GM12878 (cell line): ENCODE measurements at regions of chr19 and their contacts with region 1.

Region 1: GRCh38 chr19:45137179-45137761 is 23.5 kb downstream of the NKPD1 start:
- DNase-seq: peak; percentile 93
- ATAC-seq: peak; percentile 95
- H3K4me3 ChIP-seq: peak overlapping the region; percentile 39; the same call in 1 of the 2 replicates
- H3K27ac ChIP-seq: peak overlapping the region; percentile 97
- H3K4me1 ChIP-seq: peaks cover 51% of the 10 kb centered on the region
- H3K27me3 ChIP-seq: no peaks in the 10 kb centered on the region
- CTCF ChIP-seq: peak in 2 of 3 experiments; percentile 14 to 29; a peak in 2 of 6 replicates
- EP300 ChIP-seq: peak in 1 of 2 experiments; percentile 81; a peak in 2 of 4 replicates
- POLR2A ChIP-seq: peak; percentile 47; the same call in 1 of the 2 replicates
- RAD21 ChIP-seq: no peak

Region 2: DNA sequence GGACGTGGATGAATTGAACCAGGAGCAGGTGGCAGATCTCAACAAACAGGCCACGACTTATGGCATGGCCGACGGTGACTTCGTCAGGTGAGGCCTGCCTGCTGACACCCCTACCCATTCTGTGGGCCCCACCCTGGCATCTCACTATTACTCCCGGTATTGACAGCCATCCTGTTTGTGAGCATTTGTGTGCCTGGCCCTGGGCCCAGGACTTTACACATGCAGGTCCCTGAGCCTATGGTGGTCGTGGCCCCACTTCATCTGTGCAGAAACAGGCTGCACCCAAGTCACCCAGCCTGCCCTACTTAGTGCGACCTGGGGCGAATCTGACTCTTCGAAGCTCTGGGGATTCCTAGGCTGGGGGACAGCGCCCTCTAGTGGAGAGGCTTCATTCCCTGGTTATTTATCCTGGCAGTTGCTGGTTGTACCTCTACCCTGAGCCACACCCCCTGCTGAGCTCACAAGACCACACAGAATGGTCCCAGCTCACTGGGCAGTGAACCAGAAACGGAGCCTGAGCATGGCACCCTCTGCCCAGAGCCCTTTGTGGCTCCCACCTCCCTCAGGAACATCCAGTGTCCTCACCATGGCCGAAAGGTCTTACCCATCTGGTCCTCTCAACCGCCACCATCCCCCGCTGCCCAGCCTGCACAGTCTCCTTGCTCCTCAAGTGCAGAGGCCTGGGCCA is 77.8 kb before region 1 on chr19:
- CTCF ChIA-PET with region 1: no interaction called
- POLR2A ChIA-PET with region 1: no interaction called
- RAD21 ChIA-PET with region 1: no interaction called
- SMC1A ChIA-PET with region 1: no interaction called
- in situ Hi-C with region 1: no loop called
- intact Hi-C with region 1: no loop called
- DNase-seq: no peak
- ATAC-seq: peak; percentile 97
- H3K4me3 ChIP-seq: no peak overlapping the region
- H3K27ac ChIP-seq: no peak overlapping the region
- H3K4me1 ChIP-seq: no peaks in the 10 kb centered on the region
- H3K27me3 ChIP-seq: no peaks in the 10 kb centered on the region
- CTCF ChIP-seq: peak; percentile 90 to 97 (median 90)
- EP300 ChIP-seq: no peak
- POLR2A ChIP-seq: no peak
- RAD21 ChIP-seq: peak; percentile 93

Region 3: GRCh38 chr19:45079063-45079910 is 58.0 kb before region 1 on chr19 and contains the start of gene GEMIN7:
- CTCF ChIA-PET with region 1: interaction called, 6 read pairs
- POLR2A ChIA-PET with region 1: interaction called, 8 read pairs
- RAD21 ChIA-PET with region 1: interaction called, 3 read pairs
- SMC1A ChIA-PET with region 1: interaction called, 4 read pairs
- in situ Hi-C with region 1: no loop called
- intact Hi-C with region 1: loop called (anchors 5 kb)
- DNase-seq: peak; percentile 64
- ATAC-seq: peak; percentile 56
- H3K4me3 ChIP-seq: peak within 1 kb of the TSS; percentile 89
- H3K27ac ChIP-seq: peak within 1 kb of the TSS; percentile 95
- H3K4me1 ChIP-seq: peaks cover 22% of the 10 kb centered on the region
- H3K27me3 ChIP-seq: no peaks in the 10 kb centered on the region
- CTCF ChIP-seq: peak in 2 of 3 experiments; percentile 9 to 11; a peak in 1 of 6 replicates
- EP300 ChIP-seq: peak; percentile 65 to 80; a peak in 2 of 4 replicates
- POLR2A ChIP-seq: peak; percentile 83
- RAD21 ChIP-seq: no peak
- polyA plus RNA-seq, gene GEMIN7: 51.6 to 55.3 TPM

Region 4: DNA sequence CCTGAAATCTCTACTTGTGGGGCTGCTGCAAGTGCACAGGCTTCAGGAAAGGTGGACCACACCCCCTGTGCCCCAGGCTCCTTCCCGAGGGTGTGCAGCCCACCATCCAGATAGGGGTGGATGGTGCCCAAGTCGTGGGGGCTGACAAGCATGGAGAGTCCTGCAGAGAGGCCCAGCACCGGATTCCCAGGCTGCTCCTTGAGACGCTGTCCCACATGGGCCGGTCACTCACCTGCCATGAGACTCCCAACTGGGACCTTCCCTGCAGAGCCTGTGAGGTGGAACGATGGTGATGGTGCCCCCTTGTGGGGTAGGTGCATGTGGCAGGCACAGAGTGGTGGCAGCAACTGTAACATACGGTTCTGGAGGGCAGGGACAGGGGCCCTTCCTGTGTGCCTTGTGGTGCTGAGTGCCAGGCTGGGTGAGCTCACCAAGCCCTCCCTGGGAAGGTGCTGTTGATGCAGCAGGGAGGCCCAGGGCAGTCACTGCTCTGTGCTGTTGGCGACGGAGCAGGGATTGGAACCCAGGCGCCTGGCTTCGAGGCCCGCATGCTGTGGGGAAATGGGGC is 11.3 kb before region 1 on chr19:
- CTCF ChIA-PET with region 1: interaction called, 39 read pairs
- POLR2A ChIA-PET with region 1: interaction called, 4 read pairs
- RAD21 ChIA-PET with region 1: interaction called, 12 read pairs
- SMC1A ChIA-PET with region 1: interaction called, 39 read pairs
- in situ Hi-C with region 1: no loop called
- intact Hi-C with region 1: no loop called
- DNase-seq: no peak
- ATAC-seq: peak; percentile 95
- H3K4me3 ChIP-seq: no peak overlapping the region
- H3K27ac ChIP-seq: no peak overlapping the region
- H3K4me1 ChIP-seq: peaks cover 21% of the 10 kb centered on the region
- H3K27me3 ChIP-seq: no peaks in the 10 kb centered on the region
- CTCF ChIP-seq: peak; percentile 79 to 93 (median 83)
- EP300 ChIP-seq: no peak
- POLR2A ChIP-seq: peak; percentile 28; the same call in 1 of the 2 replicates
- RAD21 ChIP-seq: peak; percentile 76

Region 5: DNA sequence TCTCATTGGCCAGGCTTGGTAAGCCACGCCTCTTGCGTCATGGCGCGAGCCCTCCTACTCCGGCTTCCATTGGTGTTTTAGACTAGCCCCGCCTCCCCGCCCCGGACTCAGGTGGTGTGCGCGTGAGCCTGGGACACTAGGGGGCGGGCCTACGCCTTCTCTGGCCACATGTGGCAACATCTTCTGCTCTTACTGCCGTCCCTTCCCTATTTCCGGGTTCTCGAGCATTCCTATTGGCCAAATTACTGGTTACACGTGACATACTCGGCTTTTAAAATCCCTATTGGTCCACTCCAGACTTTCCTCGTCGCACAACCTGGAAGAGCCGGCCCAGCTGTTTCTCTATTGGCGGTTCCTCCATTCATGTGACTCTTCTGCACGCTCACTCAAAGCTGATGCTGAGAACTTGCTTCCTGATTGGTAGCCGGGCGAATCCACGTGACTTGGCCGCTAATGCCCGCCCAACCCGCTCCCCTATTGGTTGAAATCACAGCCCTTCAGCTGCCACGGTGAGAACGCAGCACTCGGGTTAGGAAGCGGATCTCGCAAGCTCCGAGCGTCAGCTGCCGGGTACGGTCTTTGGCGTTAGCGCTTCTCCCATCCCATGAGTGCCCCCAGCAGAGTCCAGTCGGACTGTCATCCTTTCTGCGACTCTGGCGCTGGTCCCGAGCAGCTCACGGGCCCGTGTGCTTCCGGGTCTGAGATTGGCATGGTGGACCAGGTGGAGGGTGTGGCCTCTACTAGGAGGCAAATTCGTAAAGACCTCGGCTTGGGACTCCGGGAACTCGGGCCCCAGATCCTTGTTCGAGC is 41.2 kb after region 1 on chr19 and contains the start of gene BLOC1S3:
- CTCF ChIA-PET with region 1: interaction called, 14 read pairs
- POLR2A ChIA-PET with region 1: interaction called, 33 read pairs
- RAD21 ChIA-PET with region 1: interaction called, 21 read pairs
- SMC1A ChIA-PET with region 1: interaction called, 17 read pairs
- in situ Hi-C with region 1: no loop called
- intact Hi-C with region 1: no loop called
- DNase-seq: peak; percentile 100
- ATAC-seq: peak; percentile 89
- H3K4me3 ChIP-seq: peak within 1 kb of the TSS; percentile 96
- H3K27ac ChIP-seq: peak within 1 kb of the TSS; percentile 79
- H3K4me1 ChIP-seq: peaks cover 25% of the 10 kb centered on the region
- H3K27me3 ChIP-seq: no peaks in the 10 kb centered on the region
- CTCF ChIP-seq: peak; percentile 19 to 48 (median 37); a peak in 4 of 6 replicates
- EP300 ChIP-seq: no peak
- POLR2A ChIP-seq: peak; percentile 83
- RAD21 ChIP-seq: no peak
- polyA plus RNA-seq, gene BLOC1S3: 10.0 to 14.5 TPM

Region 6: DNA sequence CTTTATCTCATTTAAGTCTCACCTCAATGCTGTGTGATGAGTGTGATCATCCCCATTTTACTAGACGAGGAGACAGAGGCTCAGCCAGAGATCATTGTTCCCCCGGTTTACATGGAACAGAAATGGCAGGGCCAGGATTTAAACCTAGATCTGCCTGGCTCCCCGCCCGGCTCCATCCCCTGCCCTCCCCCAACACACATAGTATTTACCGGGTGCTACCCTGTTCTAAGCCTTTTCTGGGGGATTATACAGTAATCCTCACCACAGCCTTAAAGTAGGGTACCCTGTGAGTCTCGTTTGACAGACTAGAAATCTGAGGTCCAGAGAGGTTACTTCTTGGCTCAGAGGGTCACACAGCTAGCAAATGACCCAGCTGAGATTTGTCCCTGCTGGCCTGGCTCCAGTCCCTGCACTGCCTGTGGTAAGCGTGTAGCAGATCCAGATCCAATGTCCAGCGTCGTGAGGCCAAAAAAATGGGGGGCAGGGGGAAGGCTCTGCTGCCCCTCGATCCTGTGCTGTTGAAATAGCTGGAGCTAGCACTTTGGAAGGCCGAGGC is 199.5 kb after region 1 on chr19:
- CTCF ChIA-PET with region 1: interaction called, 7 read pairs
- POLR2A ChIA-PET with region 1: no interaction called
- RAD21 ChIA-PET with region 1: no interaction called
- SMC1A ChIA-PET with region 1: no interaction called
- in situ Hi-C with region 1: no loop called
- intact Hi-C with region 1: loop called (anchors 5 kb)
- DNase-seq: no peak
- ATAC-seq: no peak
- H3K4me3 ChIP-seq: no peak overlapping the region
- H3K27ac ChIP-seq: no peak overlapping the region
- H3K4me1 ChIP-seq: peaks cover 3% of the 10 kb centered on the region; the same call in 1 of the 2 replicates
- H3K27me3 ChIP-seq: 0 out of 4 replicates have a peak, but pooled peaks cover 0 to 1% of the 10 kb centered on the region in 2 experiments
- CTCF ChIP-seq: no peak
- EP300 ChIP-seq: no peak
- POLR2A ChIP-seq: no peak
- RAD21 ChIP-seq: no peak